CD4-positive, alpha-beta memory T cell (primary cell): ENCODE measurements at regions of chrX and their contacts with region 1.

Region 1: GRCh38 chrX:30735839-30736238 is 82.6 kb downstream of the GK start:
- DNase-seq: peak; percentile 58 to 66 (median 60)
- H3K4me3 ChIP-seq: no peak overlapping the region
- H3K4me3 Mint-ChIP-seq: peak overlapping the region in 2 of 8 donors; percentile 23 to 26
- H3K27ac ChIP-seq: no peak overlapping the region
- H3K27ac Mint-ChIP-seq: no peak overlapping the region
- H3K4me1 ChIP-seq: no peaks in the 10 kb centered on the region
- H3K4me1 Mint-ChIP-seq: peaks cover 0 to 5% (median 3%) of the 10 kb centered on the region in 4 donors
- H3K27me3 ChIP-seq: no peaks in the 10 kb centered on the region
- H3K27me3 Mint-ChIP-seq: no peaks in the 10 kb centered on the region

Region 2: GRCh38 chrX:30483996-30484395 is 251.8 kb before region 1 on chrX:
- CTCF ChIA-PET with region 1: no interaction called
- POLR2A ChIA-PET with region 1: no interaction called
- intact Hi-C with region 1: no loop called
- DNase-seq: no peak
- H3K4me3 ChIP-seq: no peak overlapping the region
- H3K4me3 Mint-ChIP-seq: no peak overlapping the region
- H3K27ac ChIP-seq: no peak overlapping the region
- H3K27ac Mint-ChIP-seq: no peak overlapping the region
- H3K4me1 ChIP-seq: no peaks in the 10 kb centered on the region
- H3K4me1 Mint-ChIP-seq: no peaks in the 10 kb centered on the region
- H3K27me3 ChIP-seq: no peaks in the 10 kb centered on the region
- H3K27me3 Mint-ChIP-seq: no peaks in the 10 kb centered on the region

Region 3: DNA sequence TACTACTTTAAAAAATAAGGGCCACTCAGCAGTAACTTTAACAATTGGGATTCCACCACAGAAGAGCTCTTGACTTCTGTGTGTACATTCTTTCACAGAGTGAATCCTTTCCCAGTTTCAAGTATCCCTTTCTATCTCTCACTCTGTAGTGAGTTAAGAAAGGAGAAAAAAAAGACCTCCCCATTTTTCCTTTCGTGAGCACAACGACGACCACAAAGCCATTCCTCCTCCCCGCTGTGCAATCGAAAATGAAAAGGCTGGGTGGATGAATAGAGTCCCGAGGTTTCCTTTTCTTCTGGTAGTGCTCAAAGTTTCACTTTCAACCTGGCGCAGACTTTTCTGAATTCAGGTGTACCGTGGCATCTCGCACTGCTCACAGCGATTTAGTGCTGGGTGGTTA is 95.2 kb after region 1 on chrX:
- CTCF ChIA-PET with region 1: interaction called, 7 read pairs
- POLR2A ChIA-PET with region 1: no interaction called
- intact Hi-C with region 1: loop called (anchors 5 kb)
- DNase-seq: peak; percentile 16 to 30 (median 19)
- H3K4me3 ChIP-seq: no peak overlapping the region
- H3K4me3 Mint-ChIP-seq: peak overlapping the region; percentile 76 to 91 (median 77)
- H3K27ac ChIP-seq: peak overlapping the region; percentile 15
- H3K27ac Mint-ChIP-seq: peak overlapping the region; percentile 80 to 94 (median 93)
- H3K4me1 ChIP-seq: peaks cover 5% of the 10 kb centered on the region
- H3K4me1 Mint-ChIP-seq: peaks cover 14 to 35% (median 18%) of the 10 kb centered on the region in 4 donors
- H3K27me3 ChIP-seq: no peaks in the 10 kb centered on the region
- H3K27me3 Mint-ChIP-seq: no peaks in the 10 kb centered on the region